ENCODE measurements at regions of chr4 and their contacts with region 1.

Region 1: DNA sequence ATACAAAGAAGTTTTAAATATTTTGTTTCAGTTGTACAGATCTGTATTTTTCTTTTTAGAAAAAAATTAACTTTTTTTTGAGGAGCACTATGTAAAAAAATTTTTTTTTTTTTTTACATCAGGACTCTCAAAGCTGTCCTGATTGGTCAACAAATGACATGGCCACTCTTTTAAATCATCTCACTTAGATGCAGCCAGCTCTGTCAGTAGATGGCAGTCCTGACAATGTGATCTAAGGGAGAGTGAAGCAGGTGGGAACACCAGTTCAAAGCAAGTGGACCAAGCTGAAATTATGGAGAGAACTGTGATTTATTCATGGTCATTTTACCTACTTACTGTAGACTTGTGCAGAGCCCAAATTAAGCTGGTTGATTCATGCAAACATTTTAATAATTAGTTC is 174.6 kb upstream of the GPRIN3 start:
- DNase-seq: peak; percentile 50 to 76
- H3K4me3 ChIP-seq: no peak overlapping the region
- H3K4me1 ChIP-seq: no peaks in the 10 kb centered on the region
- H3K27me3 ChIP-seq: no peaks in the 10 kb centered on the region

Region 2: DNA sequence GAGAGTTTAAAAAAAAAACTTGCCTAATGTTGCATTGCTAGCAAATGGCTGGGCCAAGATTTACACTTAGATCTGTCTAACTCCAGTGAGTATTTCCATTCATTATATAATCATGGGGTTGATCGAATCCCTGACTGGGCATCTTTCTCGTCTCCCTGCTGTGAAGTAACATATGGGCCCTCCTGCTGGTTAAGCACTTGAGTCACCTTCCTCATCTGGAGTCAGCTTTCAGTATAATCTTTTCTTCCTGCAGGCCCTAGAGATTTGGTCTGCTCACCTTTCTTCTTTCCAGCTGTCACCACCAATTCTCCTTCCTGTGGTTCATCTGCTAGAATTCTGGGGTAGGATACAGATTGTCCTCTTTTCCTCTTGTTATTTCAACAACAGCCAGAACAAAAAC is 329.3 kb before region 1 on chr4:
- in situ Hi-C with region 1: no loop called
- DNase-seq: no peak
- H3K4me3 ChIP-seq: no peak overlapping the region
- H3K4me1 ChIP-seq: no peaks in the 10 kb centered on the region
- H3K27me3 ChIP-seq: no peaks in the 10 kb centered on the region

Region 3: GRCh38 chr4:89894649-89895550 is 412.7 kb after region 1 on chr4 and contains the start of gene MMRN1:
- in situ Hi-C with region 1: loop called (anchors 25 kb)
- DNase-seq: no peak
- H3K4me3 ChIP-seq: no peak within 1 kb of the TSS
- H3K4me1 ChIP-seq: peaks cover 3% of the 10 kb centered on the region
- H3K27me3 ChIP-seq: no peaks in the 10 kb centered on the region